ENCODE measurements at regions of chr7 and their contacts with region 1.

Region 1: GRCh38 chr7:2224934-2225333 is 7.8 kb downstream of the MAD1L1 start:
- DNase-seq: no peak
- H3K4me3 ChIP-seq: no peak overlapping the region
- H3K27ac ChIP-seq: no peak overlapping the region
- H3K4me1 ChIP-seq: peaks cover 0 to 4% (median 0%) of the 10 kb centered on the region in 4 donors
- H3K27me3 ChIP-seq: no peaks in the 10 kb centered on the region
- CTCF ChIP-seq: no peak
- EP300 ChIP-seq: no peak
- POLR2A ChIP-seq: no peak

Region 2: DNA sequence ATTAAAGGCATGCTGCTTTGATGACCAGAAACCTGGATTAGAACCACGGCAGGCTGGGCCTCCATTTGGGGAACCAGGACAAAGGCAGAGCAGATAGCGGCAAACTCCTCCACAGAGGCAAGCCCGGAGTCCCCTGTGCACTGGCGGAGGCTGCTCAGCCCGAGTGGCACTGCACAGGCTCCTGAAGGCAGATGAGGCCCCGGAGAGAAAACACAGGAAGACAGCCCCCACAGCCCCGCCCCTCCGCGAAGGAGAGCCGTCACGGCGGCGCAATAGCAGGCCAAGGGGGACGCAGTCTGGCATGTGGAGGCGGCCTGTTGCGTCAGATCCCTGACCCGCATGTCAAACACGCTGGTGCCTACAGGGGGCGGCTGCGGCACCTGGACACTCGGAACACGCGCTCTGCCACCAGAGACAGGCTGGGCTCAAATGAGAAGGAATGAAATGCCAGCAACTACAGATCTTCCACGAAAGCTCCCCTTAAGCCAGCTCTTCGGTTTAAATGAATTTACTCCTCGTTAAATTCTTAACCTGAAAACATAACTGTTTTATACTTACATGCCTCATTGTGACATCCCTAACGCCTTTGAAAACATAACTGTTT is 120.7 kb before region 1 on chr7:
- intact Hi-C with region 1: loop called (anchors 10 kb)
- DNase-seq: peak; percentile 67 to 94
- H3K4me3 ChIP-seq: peak overlapping the region in 2 of 4 donors; percentile 16 to 22
- H3K27ac ChIP-seq: peak overlapping the region in 4 of 5 donors; percentile 14 to 70 (median 38)
- H3K4me1 ChIP-seq: peaks cover 13 to 34% (median 19%) of the 10 kb centered on the region in 4 donors
- H3K27me3 ChIP-seq: no peaks in the 10 kb centered on the region
- CTCF ChIP-seq: peak in 4 of 7 experiments; percentile 50 to 65 (median 55)
- EP300 ChIP-seq: no peak
- POLR2A ChIP-seq: no peak

Region 3: DNA sequence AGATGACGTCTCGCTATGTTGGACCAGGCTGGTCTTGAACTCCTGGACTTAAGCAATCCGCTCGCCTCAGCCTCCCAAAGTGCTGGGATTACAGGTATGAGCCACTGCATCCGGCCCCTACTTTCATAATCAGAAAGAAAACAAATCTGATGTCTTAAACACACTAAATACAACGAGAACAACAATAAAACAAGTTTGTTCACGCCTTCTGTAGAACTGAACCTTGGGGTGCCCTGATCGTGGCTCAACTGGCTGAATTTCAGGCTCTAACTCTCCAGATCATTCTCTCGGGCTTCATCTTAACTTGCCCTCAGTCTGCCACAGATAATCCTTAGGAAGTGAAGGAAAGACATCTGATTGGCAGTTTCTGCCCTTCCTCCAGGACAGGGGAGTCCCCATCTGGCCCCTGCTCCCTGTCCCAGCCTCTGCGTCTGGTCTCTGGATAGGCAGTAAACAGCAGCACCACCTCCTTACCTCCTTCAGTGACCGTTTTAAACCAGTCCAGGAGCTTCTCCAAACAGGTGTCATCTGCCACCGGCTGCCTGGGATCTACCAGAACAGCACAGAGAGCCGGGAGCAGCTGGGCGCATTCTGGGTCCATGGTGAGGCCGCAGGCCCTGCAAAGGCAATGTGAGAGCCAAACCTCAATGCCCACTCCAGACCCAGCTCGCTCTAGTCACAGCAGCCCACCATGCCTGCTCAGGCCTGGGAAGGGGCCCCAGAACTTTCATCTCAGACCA is 329.1 kb after region 1 on chr7:
- intact Hi-C with region 1: no loop called
- DNase-seq: no peak
- H3K4me3 ChIP-seq: peak overlapping the region; percentile 68 to 88 (median 82)
- H3K27ac ChIP-seq: peak overlapping the region in 3 of 5 donors; percentile 95 to 99 (median 99)
- H3K4me1 ChIP-seq: peaks cover 27 to 59% (median 44%) of the 10 kb centered on the region in 4 donors
- H3K27me3 ChIP-seq: no peaks in the 10 kb centered on the region
- CTCF ChIP-seq: no peak
- EP300 ChIP-seq: no peak
- POLR2A ChIP-seq: no peak

Region 4: DNA sequence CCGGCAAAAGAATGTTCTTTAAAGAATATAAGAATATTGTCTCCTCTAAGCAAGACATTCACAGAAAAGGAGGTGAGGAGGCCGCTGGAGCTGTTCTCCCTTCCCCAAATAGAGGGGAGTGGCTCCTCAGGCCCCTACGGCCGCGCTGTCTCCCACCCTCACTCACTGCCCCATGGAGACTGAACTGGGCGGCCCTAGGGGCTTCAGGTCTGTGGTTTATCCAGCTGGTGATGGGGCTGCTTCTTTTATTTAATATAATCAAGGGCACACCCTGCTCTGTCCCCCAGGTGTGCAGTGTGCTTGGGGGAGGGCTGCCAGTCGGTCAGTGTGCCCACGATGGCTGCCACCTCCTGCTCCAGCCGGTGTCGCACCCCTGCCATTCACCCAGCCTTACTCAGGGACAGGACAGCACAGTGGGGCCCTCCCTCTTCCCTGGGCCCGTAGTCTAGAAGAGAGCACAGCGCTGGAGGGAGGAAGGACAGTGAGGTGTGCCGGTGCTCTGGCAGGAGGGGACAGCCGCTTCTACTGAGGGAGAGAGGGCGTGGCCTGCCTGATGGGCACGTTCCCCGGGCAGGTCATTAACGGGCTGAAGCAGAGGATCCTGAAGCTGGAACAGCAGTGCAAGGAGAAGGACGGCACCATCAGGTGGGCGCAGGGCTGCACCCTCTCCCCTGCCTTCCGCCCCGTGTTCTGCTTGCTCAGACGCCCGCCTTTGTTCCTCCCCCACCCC is 357.2 kb after region 1 on chr7:
- intact Hi-C with region 1: no loop called
- DNase-seq: no peak
- H3K4me3 ChIP-seq: no peak overlapping the region
- H3K27ac ChIP-seq: no peak overlapping the region
- H3K4me1 ChIP-seq: no peaks in the 10 kb centered on the region
- H3K27me3 ChIP-seq: no peaks in the 10 kb centered on the region
- CTCF ChIP-seq: no peak
- EP300 ChIP-seq: no peak
- POLR2A ChIP-seq: no peak

Measured in stomach (tissue), 19 donors.